Right ventricle myocardium inferior (tissue), 1 donor: ENCODE measurements at regions of chr1 and their contacts with region 1.

Region 1: DNA sequence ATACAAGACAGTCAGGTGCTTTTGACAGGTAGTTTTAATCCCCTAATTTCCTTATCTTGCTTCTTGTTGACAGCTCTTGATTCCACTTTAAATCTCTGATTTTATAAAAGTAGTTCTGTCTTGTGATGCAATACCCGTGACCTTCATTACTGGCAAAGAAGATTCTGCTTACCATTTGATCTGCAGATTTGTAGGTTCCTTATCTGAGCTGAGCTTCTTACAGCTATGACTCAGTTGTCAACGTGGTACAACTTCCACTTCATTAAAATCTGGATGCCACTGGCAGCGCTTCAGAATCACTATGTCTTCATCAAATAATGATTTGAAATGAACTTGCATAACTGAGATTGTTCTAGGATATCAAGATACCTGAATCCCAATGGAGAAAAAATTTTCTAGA is 543.6 kb upstream of the B3GALT2 start:
- DNase-seq: no peak
- ATAC-seq: no peak

Region 2: DNA sequence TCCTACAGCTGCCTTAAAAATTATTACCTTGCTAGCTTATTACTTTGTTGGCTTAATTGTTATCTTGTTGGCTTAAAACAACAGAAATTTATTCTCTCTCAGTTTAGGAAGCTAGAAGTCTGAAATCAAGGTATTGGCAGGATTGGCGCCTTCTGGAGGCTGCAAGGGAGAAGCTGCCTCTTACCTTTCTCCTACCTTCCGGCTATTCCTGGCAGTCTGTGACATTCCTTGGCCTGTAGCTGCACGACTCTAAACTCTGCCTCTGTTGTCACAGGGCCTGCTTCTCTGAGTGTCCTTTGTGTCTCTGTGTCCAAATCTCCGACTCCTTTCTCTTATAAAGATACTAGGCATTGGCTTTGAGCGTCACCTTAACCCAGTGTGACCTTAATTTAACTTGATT is 36.3 kb after region 1 on chr1:
- intact Hi-C with region 1: no loop called
- DNase-seq: no peak
- ATAC-seq: no peak

Region 3: DNA sequence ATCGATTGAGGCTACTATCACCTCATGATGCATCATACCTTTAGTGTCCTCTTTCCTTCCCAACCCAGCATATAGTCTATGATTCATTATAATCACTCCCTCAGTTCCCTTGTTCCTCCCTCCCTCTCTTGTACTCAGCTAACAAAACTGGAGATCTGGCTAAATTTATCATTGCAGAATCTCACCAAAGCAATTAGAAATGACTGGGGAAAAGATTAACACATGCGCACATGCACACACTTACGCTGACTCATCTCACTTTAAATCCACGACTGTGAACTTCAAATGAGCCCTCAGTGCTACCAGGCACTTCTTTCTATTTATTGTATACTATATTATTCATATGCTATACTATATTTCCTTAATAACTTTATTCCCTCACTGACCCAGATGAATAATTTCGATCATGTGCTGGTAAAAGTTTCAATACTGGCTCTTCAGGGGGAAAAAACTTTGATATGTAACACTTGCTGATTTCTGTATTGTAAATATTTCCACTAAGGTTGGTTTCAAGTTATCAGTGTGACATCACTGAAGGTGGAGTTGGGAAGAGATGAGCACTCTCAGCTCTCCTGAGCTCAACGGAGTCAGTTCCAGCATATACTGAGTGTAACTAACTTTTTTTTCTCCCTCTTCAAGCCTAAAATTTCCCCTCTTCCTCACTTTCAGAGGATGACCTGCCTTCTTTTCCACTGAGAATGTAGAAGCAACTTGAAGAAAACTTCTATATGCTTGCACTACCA is 70.1 kb after region 1 on chr1:
- intact Hi-C with region 1: loop called (anchors 10 kb)
- DNase-seq: no peak
- ATAC-seq: no peak